MCF 10A (cell line): ENCODE measurements at regions of chr11 and their contacts with region 1.

Region 1: GRCh38 chr11:72015511-72016171 is 16.9 kb downstream of the IL18BP start:
- DNase-seq: no peak
- H3K4me3 Mint-ChIP-seq: no peak overlapping the region
- H3K27ac Mint-ChIP-seq: no peak overlapping the region
- H3K4me1 Mint-ChIP-seq: peaks cover 34% of the 10 kb centered on the region
- H3K27me3 Mint-ChIP-seq: no peaks in the 10 kb centered on the region
- CTCF ChIP-seq: peak; percentile 20

Region 2: GRCh38 chr11:71908218-71908617 is 107.4 kb before region 1 on chr11:
- CTCF ChIA-PET with region 1: no interaction called
- POLR2A ChIA-PET with region 1: no interaction called
- intact Hi-C with region 1: no loop called
- DNase-seq: no peak
- H3K4me3 Mint-ChIP-seq: no peak overlapping the region
- H3K27ac Mint-ChIP-seq: no peak overlapping the region
- H3K4me1 Mint-ChIP-seq: no peaks in the 10 kb centered on the region
- H3K27me3 Mint-ChIP-seq: no peaks in the 10 kb centered on the region
- CTCF ChIP-seq: no peak

Region 3: GRCh38 chr11:72004936-72005500 is 10.6 kb before region 1 on chr11:
- CTCF ChIA-PET with region 1: interaction called, 7 read pairs
- POLR2A ChIA-PET with region 1: interaction called, 10 read pairs
- intact Hi-C with region 1: no loop called
- DNase-seq: no peak
- H3K4me3 Mint-ChIP-seq: no peak overlapping the region
- H3K27ac Mint-ChIP-seq: no peak overlapping the region
- H3K4me1 Mint-ChIP-seq: no peaks in the 10 kb centered on the region
- H3K27me3 Mint-ChIP-seq: no peaks in the 10 kb centered on the region
- CTCF ChIP-seq: no peak